Aorta (tissue), 5 donors: ENCODE measurements at regions of chr3 and their contacts with region 1.

Region 1: DNA sequence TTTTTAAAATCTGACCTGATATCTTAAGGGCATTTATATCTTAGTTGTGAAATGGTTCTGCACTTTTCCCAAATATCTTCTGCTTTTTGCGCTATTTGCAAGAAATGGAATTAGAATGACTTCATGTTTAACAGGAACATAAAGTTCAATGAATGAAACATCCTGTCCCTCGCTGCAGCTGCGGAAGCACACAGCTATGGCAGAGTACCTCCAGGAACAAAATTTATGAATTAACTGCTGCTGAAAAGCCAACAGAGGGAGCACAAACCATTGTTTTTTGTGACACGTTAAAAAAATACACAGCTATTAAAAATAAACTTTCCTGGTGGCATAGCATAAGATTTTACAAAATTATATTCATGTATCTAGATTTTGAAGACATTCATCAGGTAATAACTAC is 404.4 kb upstream of the MDFIC2 start:
- DNase-seq: peak in 1 of 2 donors; percentile 45
- ATAC-seq: no peak
- H3K4me3 ChIP-seq: no peak overlapping the region
- H3K27ac ChIP-seq: no peak overlapping the region
- H3K4me1 ChIP-seq: no peaks in the 10 kb centered on the region
- H3K27me3 ChIP-seq: no peaks in the 10 kb centered on the region

Region 2: DNA sequence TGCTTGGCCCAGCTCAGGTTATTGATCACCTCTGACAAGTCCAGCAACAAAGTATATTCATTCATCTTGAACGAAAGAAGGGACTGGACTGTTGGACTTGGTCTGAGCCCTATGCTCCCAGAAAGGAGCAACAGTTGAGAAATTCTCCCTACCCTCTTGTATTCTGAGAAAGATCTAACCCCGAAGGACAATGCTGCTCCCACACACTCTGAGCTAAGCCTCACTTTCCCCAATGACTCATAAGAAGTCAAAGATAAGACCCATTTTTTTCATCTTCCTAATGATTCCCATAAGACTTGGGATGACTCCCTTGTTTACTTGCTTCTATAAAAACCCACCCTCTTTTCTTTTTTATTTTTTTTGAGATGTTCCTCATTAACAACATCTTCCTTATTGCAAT is 145.0 kb after region 1 on chr3:
- intact Hi-C with region 1: no loop called
- DNase-seq: no peak
- ATAC-seq: peak; percentile 65
- H3K4me3 ChIP-seq: no peak overlapping the region
- H3K27ac ChIP-seq: no peak overlapping the region
- H3K4me1 ChIP-seq: peaks cover 0 to 5% of the 10 kb centered on the region in 2 donors
- H3K27me3 ChIP-seq: no peaks in the 10 kb centered on the region

Region 3: GRCh38 chr3:70963431-70964275 is 246.8 kb after region 1 on chr3:
- intact Hi-C with region 1: loop called in 1 of 2 experiments (anchors 10 kb)
- DNase-seq: no peak
- ATAC-seq: no peak
- H3K4me3 ChIP-seq: no peak overlapping the region
- H3K27ac ChIP-seq: no peak overlapping the region
- H3K4me1 ChIP-seq: peaks cover 0 to 4% of the 10 kb centered on the region in 2 donors
- H3K27me3 ChIP-seq: no peaks in the 10 kb centered on the region

Region 4: DNA sequence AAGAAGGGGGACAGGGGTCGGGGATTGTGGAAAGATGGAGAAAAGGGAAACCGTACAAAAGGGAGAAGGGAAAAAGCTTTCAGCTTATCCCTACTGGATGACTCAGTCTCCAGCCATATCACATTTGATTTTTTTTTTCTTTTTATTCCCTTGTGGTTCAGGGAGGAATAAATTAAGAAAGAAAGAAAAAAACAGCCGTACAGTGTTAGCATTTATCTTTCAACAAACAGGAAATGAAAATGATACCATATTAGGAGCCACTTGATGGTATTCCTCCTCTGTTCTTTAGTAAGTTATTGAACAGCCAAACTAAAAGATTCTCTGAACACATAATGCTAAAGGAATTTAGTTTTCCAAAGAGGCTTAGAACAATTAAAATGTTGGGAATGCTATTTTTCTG is 272.3 kb after region 1 on chr3:
- intact Hi-C with region 1: no loop called
- DNase-seq: no peak
- ATAC-seq: peak; percentile 64
- H3K4me3 ChIP-seq: no peak overlapping the region
- H3K27ac ChIP-seq: no peak overlapping the region
- H3K4me1 ChIP-seq: peaks cover 6 to 29% of the 10 kb centered on the region in 2 donors
- H3K27me3 ChIP-seq: no peaks in the 10 kb centered on the region